PC-9 (cell line): ENCODE measurements at regions of chr14 and their contacts with region 1.

Region 1: GRCh38 chr14:52363041-52363704 is 49.1 kb downstream of the PTGER2 start:
- DNase-seq: no peak
- H3K4me3 ChIP-seq: no peak overlapping the region
- H3K27ac ChIP-seq: no peak overlapping the region
- H3K4me1 ChIP-seq: no peaks in the 10 kb centered on the region
- H3K27me3 ChIP-seq: no peaks in the 10 kb centered on the region
- CTCF ChIP-seq: no peak

Region 2: DNA sequence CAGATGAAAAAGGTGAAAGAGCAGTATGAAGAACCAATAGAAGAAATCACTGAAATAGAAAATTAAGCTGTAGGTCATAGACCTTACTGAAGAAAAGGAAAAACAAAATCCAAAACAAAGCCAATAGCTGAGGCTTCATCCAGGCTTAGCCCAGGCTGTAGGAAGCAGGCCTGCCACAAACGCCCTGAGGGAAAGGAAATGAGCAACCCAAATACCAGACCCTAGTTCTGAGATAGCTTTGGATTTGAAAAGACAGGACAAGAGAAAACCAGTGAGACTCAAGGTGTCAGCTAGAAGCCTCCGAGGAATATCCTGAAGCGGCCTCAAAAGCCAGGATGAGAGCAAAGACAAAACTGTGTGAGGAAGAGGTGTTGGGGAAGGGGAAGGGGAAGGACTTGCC is 508.4 kb after region 1 on chr14:
- CTCF ChIA-PET with region 1: interaction called, 13 read pairs
- POLR2A ChIA-PET with region 1: no interaction called
- intact Hi-C with region 1: no loop called
- DNase-seq: no peak
- H3K4me3 ChIP-seq: no peak overlapping the region
- H3K27ac ChIP-seq: no peak overlapping the region
- H3K4me1 ChIP-seq: peaks cover 11% of the 10 kb centered on the region; the same call in 1 of the 2 replicates
- H3K27me3 ChIP-seq: no peaks in the 10 kb centered on the region
- CTCF ChIP-seq: no peak